GM12878 (cell line): ENCODE measurements at regions of chr11 and their contacts with region 1.

Region 1: DNA sequence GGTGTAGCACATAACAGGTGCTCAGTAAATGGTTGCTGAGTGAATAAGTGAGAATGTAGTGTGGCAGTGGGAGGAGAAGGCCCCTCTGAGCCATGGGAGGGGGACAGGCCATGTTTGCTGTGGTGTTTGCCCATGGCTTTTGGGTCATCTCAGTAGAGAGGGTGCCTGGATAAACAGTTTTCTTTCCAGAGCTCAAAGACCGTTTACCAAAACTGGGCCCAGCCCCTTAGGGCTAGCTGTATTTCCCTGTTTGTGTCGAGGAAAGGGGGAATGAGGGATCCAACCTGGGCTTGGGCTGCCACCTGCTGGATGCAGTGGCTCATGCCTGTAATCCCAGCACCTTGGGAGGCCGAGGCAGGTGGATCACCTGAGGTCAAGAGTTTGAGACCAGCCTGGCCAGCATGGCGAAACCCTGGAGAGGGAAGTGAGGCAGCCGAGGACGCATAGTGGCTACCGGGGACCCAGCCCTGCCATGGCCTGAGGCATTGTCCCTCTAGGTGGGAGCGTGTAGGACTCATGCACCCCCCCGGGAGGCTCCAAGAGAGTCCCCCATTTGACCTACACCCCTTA is 8.7 kb upstream of the LTO1 start:
- DNase-seq: no peak
- ATAC-seq: peak; percentile 24; the same call in 1 of the 3 replicates
- H3K4me3 ChIP-seq: no peak overlapping the region
- H3K27ac ChIP-seq: no peak overlapping the region
- H3K4me1 ChIP-seq: no peaks in the 10 kb centered on the region
- H3K27me3 ChIP-seq: no peaks in the 10 kb centered on the region
- CTCF ChIP-seq: peak in 2 of 3 experiments; percentile 26 to 35; a peak in 4 of 6 replicates
- EP300 ChIP-seq: no peak
- POLR2A ChIP-seq: no peak
- RAD21 ChIP-seq: peak; percentile 24; the same call in 1 of the 2 replicates

Region 2: DNA sequence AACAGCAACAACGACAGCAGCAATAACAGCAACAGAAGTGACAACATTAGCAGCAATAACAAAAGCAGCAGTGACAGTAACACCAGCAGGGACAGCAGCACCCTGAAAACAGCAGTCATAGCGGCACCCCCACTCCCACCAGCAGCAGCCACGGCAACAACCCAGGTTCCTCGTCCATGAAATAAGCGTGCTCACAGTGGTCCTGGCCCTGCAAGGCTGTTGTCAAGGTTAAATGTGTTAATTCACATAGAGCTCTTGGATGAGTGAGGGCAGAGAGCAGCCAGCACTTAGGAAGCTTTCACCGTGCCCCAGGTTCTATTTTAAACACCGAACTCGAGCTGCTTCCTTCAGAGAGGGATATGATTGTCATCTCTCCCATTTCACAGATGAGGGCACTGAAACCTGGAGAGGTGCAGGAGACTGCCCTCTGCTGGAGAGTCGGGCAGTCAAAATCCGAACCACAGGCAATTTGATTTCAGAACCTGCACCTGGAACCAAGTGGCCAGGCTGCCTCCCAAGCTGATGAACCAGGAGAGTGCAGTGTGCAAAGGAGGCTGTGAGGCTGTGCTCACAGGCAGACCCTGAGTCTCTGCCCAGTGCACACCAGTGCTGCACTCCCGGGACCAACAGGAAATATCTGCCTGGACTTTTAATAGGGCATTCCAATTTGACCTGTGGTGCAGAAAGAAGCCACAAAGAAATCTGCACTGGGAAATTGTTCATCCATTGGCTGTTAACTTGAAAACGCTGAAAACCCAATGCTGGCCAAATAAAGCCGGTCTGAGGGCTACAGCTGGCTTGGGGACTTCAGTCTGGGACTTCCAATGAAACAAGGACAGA is 158.2 kb after region 1 on chr11:
- CTCF ChIA-PET with region 1: interaction called, 3 read pairs
- POLR2A ChIA-PET with region 1: no interaction called
- RAD21 ChIA-PET with region 1: no interaction called
- SMC1A ChIA-PET with region 1: no interaction called
- in situ Hi-C with region 1: no loop called
- intact Hi-C with region 1: loop called (anchors 2 kb)
- DNase-seq: no peak
- ATAC-seq: 0 out of 3 replicates have a peak, but pooled peaks have one; percentile 38
- H3K4me3 ChIP-seq: no peak overlapping the region
- H3K27ac ChIP-seq: no peak overlapping the region
- H3K4me1 ChIP-seq: no peaks in the 10 kb centered on the region
- H3K27me3 ChIP-seq: peaks cover 0 to 5% of the 10 kb centered on the region in 2 experiments; a peak in 2 of 4 replicates
- CTCF ChIP-seq: peak; percentile 41 to 50 (median 46)
- EP300 ChIP-seq: no peak
- POLR2A ChIP-seq: no peak
- RAD21 ChIP-seq: peak; percentile 24

Region 3: DNA sequence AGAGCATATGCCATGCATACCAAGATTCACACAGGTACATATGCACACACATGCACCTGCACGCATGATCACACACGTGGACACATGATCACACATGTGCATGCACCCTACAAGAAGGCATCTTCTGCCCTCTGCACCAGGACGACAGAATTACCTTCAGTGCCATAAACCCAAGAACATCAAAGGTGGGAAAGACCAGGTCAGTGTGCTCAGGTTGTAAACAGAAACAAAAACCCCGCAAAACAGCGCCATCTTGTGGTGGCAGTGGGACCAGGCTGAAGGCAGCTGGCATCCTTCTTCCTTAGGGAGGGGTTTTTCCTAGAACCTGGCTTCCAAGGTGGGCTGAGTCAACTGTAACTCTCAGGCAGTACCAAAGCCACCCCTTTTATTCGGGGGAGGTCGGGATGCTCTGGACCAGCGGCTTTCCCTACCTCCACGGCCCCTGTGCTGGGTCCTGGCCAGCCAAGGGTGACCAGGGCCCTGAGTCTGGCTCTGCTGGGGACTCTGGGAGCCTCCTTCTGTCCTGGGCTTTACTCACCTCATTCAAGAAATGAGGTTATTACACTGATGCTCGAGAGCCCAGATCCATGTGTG is 204.7 kb after region 1 on chr11:
- CTCF ChIA-PET with region 1: interaction called, 4 read pairs
- POLR2A ChIA-PET with region 1: no interaction called
- RAD21 ChIA-PET with region 1: no interaction called
- SMC1A ChIA-PET with region 1: no interaction called
- in situ Hi-C with region 1: loop called (anchors 5 kb)
- intact Hi-C with region 1: loop called (anchors 1 kb)
- DNase-seq: no peak
- ATAC-seq: peak; percentile 89
- H3K4me3 ChIP-seq: no peak overlapping the region
- H3K27ac ChIP-seq: no peak overlapping the region
- H3K4me1 ChIP-seq: no peaks in the 10 kb centered on the region
- H3K27me3 ChIP-seq: no peaks in the 10 kb centered on the region; a peak in 1 of 4 replicates
- CTCF ChIP-seq: peak; percentile 77 to 89 (median 89)
- EP300 ChIP-seq: no peak
- POLR2A ChIP-seq: no peak
- RAD21 ChIP-seq: peak; percentile 51

Region 4: GRCh38 chr11:70191495-70192140 is 507.8 kb after region 1 on chr11:
- CTCF ChIA-PET with region 1: no interaction called
- POLR2A ChIA-PET with region 1: no interaction called
- RAD21 ChIA-PET with region 1: no interaction called
- SMC1A ChIA-PET with region 1: no interaction called
- in situ Hi-C with region 1: loop called (anchors 10 kb)
- intact Hi-C with region 1: no loop called
- DNase-seq: no peak
- ATAC-seq: peak; percentile 96
- H3K4me3 ChIP-seq: no peak overlapping the region
- H3K27ac ChIP-seq: no peak overlapping the region
- H3K4me1 ChIP-seq: no peaks in the 10 kb centered on the region
- H3K27me3 ChIP-seq: no peaks in the 10 kb centered on the region
- CTCF ChIP-seq: peak; percentile 61 to 83 (median 79)
- EP300 ChIP-seq: no peak
- POLR2A ChIP-seq: no peak
- RAD21 ChIP-seq: peak; percentile 85

Region 5: DNA sequence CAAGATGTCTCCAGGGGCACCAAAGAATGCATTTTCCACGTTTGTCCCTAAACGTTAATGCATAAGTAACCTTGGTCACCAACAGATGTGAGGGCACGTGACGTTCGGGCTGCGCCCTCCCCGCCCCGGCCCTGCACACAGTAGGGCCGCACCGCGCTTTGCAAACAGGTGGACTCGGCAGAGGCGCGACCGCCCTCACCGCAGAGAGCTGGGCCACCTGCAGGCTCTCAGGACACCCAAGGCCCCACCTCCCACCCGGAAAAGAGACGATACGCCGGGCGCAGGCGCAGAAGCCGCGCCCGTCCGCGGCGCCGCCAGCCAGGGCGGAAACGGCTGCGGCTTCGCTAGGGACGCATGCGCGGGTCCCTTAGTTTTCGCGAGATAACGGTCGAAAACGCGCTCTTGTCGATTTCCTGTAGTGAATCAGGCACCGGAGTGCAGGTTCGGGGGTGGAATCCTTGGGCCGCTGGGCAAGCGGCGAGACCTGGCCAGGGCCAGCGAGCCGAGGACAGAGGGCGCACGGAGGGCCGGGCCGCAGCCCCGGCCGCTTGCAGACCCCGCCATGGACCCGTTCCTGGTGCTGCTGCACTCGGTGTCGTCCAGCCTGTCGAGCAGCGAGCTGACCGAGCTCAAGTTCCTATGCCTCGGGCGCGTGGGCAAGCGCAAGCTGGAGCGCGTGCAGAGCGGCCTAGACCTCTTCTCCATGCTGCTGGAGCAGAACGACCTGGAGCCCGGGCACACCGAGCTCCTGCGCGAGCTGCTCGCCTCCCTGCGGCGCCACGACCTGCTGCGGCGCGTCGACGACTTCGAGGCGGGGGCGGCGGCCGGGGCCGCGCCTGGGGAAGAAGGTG is 519.3 kb after region 1 on chr11 and contains the start of gene FADD:
- CTCF ChIA-PET with region 1: no interaction called
- POLR2A ChIA-PET with region 1: no interaction called
- RAD21 ChIA-PET with region 1: no interaction called
- SMC1A ChIA-PET with region 1: no interaction called
- in situ Hi-C with region 1: loop called (anchors 10 kb)
- intact Hi-C with region 1: loop called (anchors 5 kb)
- DNase-seq: peak; percentile 83
- ATAC-seq: peak; percentile 87
- H3K4me3 ChIP-seq: peak within 1 kb of the TSS; percentile 82
- H3K27ac ChIP-seq: peak within 1 kb of the TSS; percentile 88
- H3K4me1 ChIP-seq: peaks cover 12% of the 10 kb centered on the region
- H3K27me3 ChIP-seq: no peaks in the 10 kb centered on the region
- CTCF ChIP-seq: no peak
- EP300 ChIP-seq: peak in 1 of 2 experiments; percentile 78; a peak in 2 of 4 replicates
- POLR2A ChIP-seq: peak; percentile 95
- RAD21 ChIP-seq: no peak
- polyA plus RNA-seq, gene FADD: 0.32 to 0.88 TPM